Aorta (tissue), 5 donors: ENCODE measurements at regions of chr2 and their contacts with region 1.

Region 1: DNA sequence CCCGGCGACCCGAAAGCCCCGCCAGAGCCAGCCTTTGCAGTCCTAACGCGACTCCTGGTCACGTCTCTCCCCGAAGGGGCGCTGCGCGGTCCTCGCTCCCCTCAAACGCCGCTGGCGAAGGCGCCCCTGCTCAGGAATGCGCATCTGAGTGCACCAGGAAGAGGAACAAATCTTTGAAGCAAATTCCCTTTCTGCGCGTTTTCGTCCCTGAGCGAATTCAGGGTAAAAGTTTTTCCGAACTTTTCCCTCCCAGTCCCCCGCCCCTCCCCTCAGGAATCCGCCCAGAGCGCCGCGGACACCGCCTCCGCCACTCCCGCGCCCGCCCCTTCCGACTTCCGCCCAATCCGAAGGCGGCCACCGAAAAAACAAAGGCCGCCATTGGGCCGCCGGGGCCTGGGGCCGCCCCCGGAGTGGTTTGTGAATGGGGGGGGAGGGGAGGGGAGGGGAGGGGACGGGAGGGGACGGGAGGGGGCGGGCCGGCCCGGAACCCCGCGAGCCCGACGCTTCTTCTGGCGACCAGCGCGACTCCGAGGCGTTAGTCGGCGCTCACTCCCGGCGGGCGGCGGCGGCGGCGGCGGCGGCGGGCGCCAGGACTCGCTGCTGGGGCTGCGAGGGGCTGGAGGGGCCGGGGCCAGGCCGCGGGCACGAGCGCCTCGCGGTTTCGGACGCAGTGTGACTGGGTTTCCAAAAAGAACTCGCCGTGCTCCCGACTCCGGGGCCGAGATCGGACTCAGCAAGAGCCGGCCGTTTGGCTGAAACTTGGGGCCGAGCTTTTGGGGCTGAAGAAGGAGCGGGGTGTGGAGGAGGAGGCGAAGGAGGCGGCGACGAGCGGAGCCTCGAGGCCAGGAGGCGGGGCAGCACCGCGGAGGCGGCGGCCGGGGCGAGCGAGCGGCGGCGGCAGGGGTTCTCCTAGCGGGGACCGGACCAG is at the start of gene FZD7:
- DNase-seq: peak; percentile 96 to 98
- ATAC-seq: peak; percentile 95
- H3K4me3 ChIP-seq: peak within 1 kb of the TSS; percentile 53 to 76
- H3K27ac ChIP-seq: peak within 1 kb of the TSS; percentile 91 to 96
- H3K4me1 ChIP-seq: no peaks in the 10 kb centered on the region
- H3K27me3 ChIP-seq: no peaks in the 10 kb centered on the region
- total RNA-seq, gene FZD7: 19.0 to 24.3 TPM

Region 2: GRCh38 chr2:201860636-201861066 is 172.9 kb before region 1 on chr2:
- intact Hi-C with region 1: loop called (anchors 5 kb)
- DNase-seq: no peak
- ATAC-seq: peak; percentile 88
- H3K4me3 ChIP-seq: no peak overlapping the region
- H3K27ac ChIP-seq: no peak overlapping the region
- H3K4me1 ChIP-seq: no peaks in the 10 kb centered on the region
- H3K27me3 ChIP-seq: peaks cover 0 to 2% of the 10 kb centered on the region in 2 donors

Region 3: DNA sequence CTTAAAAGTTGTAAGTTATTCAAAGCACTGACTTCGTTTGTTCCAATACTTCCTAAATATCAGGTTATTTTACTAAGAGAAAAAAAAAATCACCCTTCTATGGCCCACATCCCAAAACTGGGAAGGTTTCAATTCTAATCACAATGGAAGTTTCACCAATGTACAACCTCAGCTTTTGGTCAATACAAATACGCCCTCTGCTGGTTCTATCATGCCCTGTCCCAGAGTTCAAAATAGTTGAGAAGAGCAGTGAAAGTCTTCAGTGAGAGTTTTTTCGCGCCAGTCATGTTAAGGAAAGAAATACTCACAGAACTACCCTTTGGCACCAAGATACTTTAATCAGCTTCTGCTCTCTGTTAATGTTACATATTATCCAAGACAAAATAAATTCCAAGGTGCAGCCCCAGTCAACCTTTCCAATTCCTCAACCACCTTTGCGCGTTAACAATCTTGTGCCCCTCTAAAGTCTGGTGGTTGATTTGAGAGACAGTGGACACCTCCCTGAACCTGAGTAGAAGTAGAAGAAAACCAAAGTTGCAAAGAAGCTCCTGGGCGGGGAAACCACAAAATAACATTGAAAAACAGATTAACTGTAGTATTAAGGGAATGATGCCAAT is 144.9 kb after region 1 on chr2:
- intact Hi-C with region 1: loop called (anchors 2 to 5 kb)
- DNase-seq: no peak
- ATAC-seq: peak; percentile 87
- H3K4me3 ChIP-seq: no peak overlapping the region
- H3K27ac ChIP-seq: no peak overlapping the region
- H3K4me1 ChIP-seq: no peaks in the 10 kb centered on the region
- H3K27me3 ChIP-seq: no peaks in the 10 kb centered on the region